Right lobe of liver (tissue), 6 donors: ENCODE measurements at regions of chr16 and their contacts with region 1.

Region 1: DNA sequence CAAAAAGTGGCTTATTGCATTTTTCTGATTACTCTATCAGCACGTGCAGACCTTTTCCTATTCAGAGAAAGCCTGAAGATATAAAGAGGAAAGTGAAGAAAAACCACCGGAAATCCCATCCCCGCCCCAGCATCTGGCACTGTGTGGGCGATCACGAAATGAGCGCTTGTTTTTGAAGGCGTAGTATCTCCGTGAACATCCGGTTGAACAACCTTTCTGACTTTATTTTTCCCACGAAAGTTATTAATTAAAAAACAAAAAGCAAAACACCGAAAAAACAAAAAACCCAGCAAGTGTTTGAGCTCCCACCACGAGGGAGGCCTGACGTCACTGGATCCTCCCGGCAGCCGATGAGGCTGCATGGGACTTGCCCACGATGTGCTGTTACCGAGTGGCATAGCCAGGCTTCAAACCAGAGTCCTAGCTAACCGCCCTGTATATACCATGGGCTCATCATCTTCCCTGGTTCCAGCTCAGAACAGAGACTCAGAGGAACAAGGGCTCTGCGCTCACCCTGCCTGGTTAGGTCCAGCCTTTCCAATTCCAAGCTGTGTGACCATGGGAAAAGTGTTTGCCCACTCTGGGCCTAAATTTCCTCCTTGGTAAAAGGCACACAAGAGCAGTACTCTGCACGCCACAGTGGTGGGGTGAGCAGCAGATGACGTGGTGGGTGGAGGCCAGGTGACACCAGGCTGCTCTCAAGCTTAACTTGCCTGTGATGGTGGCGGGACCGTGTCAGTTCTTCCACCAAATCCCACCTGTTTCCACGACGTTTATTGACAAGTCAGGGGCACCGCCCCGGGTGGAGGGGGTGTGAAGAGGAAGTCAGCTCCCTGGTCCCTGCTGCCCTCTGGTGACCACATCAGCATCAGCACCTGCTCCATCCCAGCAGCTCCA is 34.3 kb upstream of the IL21R start:
- DNase-seq: peak; percentile 81 to 88 (median 87)
- ATAC-seq: peak; percentile 58 to 74 (median 66)
- H3K4me3 ChIP-seq: peak overlapping the region in 1 of 3 donors; percentile 18
- H3K27ac ChIP-seq: peak overlapping the region; percentile 43 to 75 (median 58)
- H3K4me1 ChIP-seq: peaks cover 0 to 38% (median 22%) of the 10 kb centered on the region in 4 donors
- H3K27me3 ChIP-seq: no peaks in the 10 kb centered on the region
- CTCF ChIP-seq: peak; percentile 78 to 92 (median 88)
- POLR2A ChIP-seq: no peak

Region 2: DNA sequence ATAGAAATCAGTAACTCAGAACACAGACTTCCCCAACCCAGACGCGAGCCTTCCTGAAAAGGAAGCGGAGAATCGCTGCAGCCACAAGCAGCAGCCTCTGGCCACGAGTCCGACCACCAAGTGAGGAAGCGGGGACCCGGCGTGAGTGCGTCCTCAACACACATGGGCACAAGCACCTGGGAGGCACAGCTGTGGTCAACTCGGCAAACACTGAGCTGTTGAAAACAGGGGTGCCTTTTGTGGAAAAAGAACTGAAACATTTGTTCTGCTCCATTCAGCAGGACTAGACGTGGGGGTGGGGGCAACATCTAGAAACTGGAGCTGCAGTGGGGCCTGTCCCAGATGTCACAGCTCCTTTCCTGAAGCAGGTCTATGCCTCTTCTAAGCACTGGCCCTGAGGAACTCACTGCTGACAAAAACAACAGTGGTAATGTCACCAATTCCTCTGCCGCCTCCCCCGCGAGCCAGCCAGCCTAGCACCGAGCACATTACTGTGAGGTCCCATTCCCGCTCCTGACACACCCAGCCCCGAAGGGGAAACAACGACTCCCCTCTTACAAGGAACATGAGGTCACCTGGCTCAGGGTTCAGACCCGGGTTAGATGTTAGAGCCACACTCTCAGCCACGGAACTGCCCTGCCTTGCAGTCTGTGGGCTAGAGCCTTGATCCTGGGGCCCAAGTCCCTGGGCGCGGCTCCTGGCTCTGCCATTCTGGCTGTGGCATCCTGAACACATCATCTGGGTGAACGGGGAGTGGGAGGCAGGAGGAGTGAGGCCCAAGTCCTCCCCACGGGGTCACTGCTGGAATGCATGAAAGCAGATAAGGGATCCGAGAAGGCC is 135.4 kb before region 1 on chr16:
- intact Hi-C with region 1: loop called in 1 of 2 experiments (anchors 5 kb)
- DNase-seq: peak in 1 of 3 donors; percentile 52
- ATAC-seq: no peak
- H3K4me3 ChIP-seq: no peak overlapping the region
- H3K27ac ChIP-seq: no peak overlapping the region
- H3K4me1 ChIP-seq: peaks cover 0 to 12% (median 0%) of the 10 kb centered on the region in 4 donors
- H3K27me3 ChIP-seq: no peaks in the 10 kb centered on the region
- CTCF ChIP-seq: no peak
- POLR2A ChIP-seq: no peak

Region 3: DNA sequence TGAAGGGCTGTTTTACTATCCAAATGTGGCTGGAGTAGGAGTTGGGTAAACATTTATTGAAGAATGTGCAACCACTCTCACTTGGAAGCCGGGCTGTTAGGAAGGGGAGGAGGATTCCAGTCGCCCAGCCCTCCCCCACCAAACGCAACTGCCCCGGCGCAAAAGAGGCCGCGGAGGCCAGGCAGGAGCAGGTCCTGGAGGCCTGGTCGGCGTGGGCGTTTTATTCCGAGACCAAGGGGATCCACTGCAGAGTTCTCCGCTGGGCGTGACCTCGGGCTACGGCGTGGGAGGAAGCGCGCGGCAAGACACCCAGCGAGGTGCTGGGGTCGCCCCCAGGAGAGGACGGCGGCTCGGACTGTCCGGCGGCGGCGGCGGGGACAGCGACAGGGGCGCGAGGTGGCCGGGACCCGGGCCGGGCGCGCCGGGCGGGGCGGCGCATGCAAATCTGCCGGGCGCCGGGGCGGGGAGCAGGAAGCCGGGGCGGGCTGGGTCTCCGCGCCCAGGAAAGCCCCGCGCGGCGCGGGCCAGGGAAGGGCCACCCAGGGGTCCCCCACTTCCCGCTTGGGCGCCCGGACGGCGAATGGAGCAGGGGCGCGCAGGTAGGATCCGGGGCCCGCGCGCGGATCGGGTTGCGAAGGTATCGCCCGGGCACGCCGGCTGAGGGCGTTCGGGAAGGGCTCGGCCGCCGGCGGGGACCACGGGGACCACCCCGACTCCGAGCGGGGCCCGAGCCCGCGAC is 54.1 kb before region 1 on chr16 and contains the start of gene IL4R:
- intact Hi-C with region 1: loop called in 1 of 2 experiments (anchors 10 kb)
- DNase-seq: peak; percentile 91 to 95 (median 93)
- ATAC-seq: peak; percentile 44 to 75 (median 70)
- H3K4me3 ChIP-seq: peak within 1 kb of the TSS; percentile 92 to 93 (median 93)
- H3K27ac ChIP-seq: peak within 1 kb of the TSS; percentile 99 to 100 (median 99)
- H3K4me1 ChIP-seq: peaks cover 0 to 53% (median 18%) of the 10 kb centered on the region in 4 donors
- H3K27me3 ChIP-seq: no peaks in the 10 kb centered on the region
- CTCF ChIP-seq: no peak
- POLR2A ChIP-seq: peak; percentile 94
- total RNA-seq, gene IL4R: 38.8 to 147 (median 46.9) TPM

Region 4: GRCh38 chr16:27326738-27327585 is 40.7 kb before region 1 on chr16:
- intact Hi-C with region 1: loop called in 1 of 2 experiments (anchors 5 kb)
- DNase-seq: peak; percentile 71 to 82 (median 72)
- ATAC-seq: peak; percentile 47 to 68 (median 62)
- H3K4me3 ChIP-seq: no peak overlapping the region
- H3K27ac ChIP-seq: peak overlapping the region; percentile 71 to 95 (median 72)
- H3K4me1 ChIP-seq: peaks cover 0 to 62% (median 34%) of the 10 kb centered on the region in 4 donors
- H3K27me3 ChIP-seq: no peaks in the 10 kb centered on the region
- CTCF ChIP-seq: peak in 1 of 4 donors; percentile 6
- POLR2A ChIP-seq: peak; percentile 49

Region 5: GRCh38 chr16:27566417-27566816 is 198.7 kb after region 1 on chr16:
- intact Hi-C with region 1: no loop called
- DNase-seq: no peak
- ATAC-seq: peak in 2 of 4 donors; percentile 29 to 34
- H3K4me3 ChIP-seq: no peak overlapping the region
- H3K27ac ChIP-seq: no peak overlapping the region
- H3K4me1 ChIP-seq: no peaks in the 10 kb centered on the region
- H3K27me3 ChIP-seq: no peaks in the 10 kb centered on the region
- CTCF ChIP-seq: no peak
- POLR2A ChIP-seq: no peak